Activated CD4-positive, alpha-beta T cell treated with anti-CD3 and anti-CD28 coated beads for 36 hours (primary cell): ENCODE measurements at regions of chr1 and their contacts with region 1.

Region 1: DNA sequence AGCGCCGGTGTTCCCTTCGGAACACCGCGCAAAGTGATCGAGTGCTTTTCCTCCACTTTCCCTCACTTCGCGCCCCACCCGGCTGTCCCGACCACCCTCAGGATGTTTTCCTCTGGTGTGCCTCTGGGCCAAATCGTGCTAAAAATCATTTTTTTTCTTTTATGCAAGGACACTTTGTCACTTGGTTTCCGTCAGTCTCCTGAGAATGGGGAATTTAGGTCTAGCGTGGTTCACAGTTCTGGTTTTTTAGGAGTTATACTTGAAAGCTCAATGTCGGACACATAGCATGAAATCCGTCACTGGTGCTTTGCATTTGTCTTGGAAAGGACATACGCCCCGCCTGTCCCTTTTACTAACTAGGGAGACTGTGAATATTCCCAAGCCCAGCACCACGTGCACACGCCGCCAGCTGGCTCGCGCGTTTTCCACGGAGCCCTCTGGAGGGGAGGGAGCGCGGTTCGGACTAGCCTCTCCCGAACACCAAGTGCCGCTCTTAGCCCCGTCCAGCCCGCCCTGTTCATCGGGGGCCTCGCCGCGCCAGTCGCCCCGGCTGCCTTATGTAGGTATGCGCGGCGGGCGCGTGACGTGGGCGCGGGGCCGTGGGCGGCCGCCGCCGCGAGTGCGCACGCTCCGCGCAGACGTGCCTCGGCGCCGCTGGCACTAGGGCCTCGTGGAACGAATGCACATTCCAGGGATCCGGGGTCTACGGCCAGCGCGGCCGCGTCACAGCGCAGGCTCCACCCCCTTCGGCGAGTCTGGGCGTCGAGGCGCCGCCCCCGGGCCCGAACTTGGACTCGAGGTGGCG is 572 bp upstream of the IRF2BP2 start:
- DNase-seq: peak; percentile 95
- ATAC-seq: peak; percentile 52
- H3K4me3 Mint-ChIP-seq: peak overlapping the region; percentile 79
- H3K27ac Mint-ChIP-seq: peak overlapping the region; percentile 90
- H3K4me1 Mint-ChIP-seq: peaks cover 29% of the 10 kb centered on the region
- H3K27me3 Mint-ChIP-seq: no peaks in the 10 kb centered on the region

Region 2: DNA sequence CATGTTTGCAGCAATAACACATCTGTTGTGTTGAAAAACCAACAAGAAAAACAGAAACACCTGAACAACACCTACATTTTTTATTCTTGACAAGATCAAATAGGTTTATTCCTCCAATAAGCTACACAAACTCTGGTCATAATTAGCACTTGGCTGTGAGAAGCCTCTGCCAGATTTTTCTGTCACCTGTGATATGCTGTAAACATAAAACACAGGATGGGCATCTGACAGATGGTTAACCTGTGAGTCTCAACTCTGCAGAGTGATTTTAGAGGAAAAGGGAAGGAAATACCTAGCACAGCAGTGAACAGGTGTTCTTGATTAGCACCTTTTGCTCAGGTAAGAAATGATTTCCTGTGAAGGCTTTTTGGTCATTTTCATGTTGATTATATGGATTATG is 412.7 kb before region 1 on chr1:
- CTCF ChIA-PET with region 1: no interaction called
- POLR2A ChIA-PET with region 1: no interaction called
- intact Hi-C with region 1: no loop called
- DNase-seq: no peak
- ATAC-seq: no peak
- H3K4me3 Mint-ChIP-seq: no peak overlapping the region
- H3K27ac Mint-ChIP-seq: no peak overlapping the region
- H3K4me1 Mint-ChIP-seq: no peaks in the 10 kb centered on the region
- H3K27me3 Mint-ChIP-seq: peaks cover 20% of the 10 kb centered on the region

Region 3: DNA sequence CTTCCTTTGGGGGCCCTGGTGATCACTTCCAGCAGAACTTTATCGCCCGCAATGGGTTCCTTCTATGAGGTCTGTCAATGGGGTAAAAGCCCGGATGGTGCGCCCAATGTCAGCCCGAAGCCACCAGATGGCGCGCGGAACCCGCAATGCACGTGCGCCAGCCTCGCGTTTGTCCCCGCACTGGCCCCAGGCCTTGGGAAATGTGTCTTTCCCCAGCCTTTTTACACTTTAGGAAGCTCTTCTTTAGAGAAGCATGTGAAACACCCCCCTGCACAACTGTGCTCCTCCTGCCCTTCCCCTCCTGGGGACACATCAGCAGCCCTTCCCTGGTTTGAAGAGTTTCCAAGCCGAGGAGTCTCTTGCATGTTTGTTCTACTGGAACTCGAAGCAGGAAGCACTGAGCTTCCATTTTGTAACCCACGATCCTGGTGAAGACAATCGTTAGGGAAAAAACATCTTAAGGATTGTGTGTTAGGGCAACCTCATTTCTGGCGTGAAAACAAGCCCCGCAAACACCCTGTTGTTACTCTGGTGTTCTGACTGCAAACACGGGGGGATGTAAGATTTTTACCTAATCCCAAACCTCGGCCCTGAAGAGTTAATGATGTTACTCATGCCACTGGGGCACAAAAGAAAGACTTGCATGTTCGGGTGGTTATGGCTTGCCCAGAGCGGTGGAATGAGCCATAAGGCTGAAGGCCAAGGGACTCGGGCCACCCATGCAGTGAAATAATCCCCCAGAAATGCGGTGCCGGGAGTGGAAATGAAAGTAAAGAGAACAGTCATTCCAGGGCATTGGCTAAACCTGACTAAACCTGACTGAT is 111.2 kb before region 1 on chr1:
- CTCF ChIA-PET with region 1: interaction called, 22 read pairs
- POLR2A ChIA-PET with region 1: interaction called, 5 read pairs
- intact Hi-C with region 1: loop called in 1 of 2 experiments (anchors 1 kb)
- DNase-seq: peak; percentile 93
- ATAC-seq: peak; percentile 54
- H3K4me3 Mint-ChIP-seq: no peak overlapping the region
- H3K27ac Mint-ChIP-seq: peak overlapping the region; percentile 80
- H3K4me1 Mint-ChIP-seq: peaks cover 76% of the 10 kb centered on the region
- H3K27me3 Mint-ChIP-seq: peaks cover 3% of the 10 kb centered on the region

Region 4: GRCh38 chr1:234722904-234723720 is 112.6 kb after region 1 on chr1:
- CTCF ChIA-PET with region 1: interaction called, 5 read pairs
- POLR2A ChIA-PET with region 1: interaction called, 20 read pairs
- intact Hi-C with region 1: loop called (anchors 1 kb)
- DNase-seq: peak; percentile 92
- ATAC-seq: peak; percentile 68
- H3K4me3 Mint-ChIP-seq: peak overlapping the region; percentile 64
- H3K27ac Mint-ChIP-seq: peak overlapping the region; percentile 97
- H3K4me1 Mint-ChIP-seq: peaks cover 66% of the 10 kb centered on the region
- H3K27me3 Mint-ChIP-seq: no peaks in the 10 kb centered on the region

Region 5: GRCh38 chr1:234842726-234843641 is 232.4 kb after region 1 on chr1:
- CTCF ChIA-PET with region 1: interaction called, 5 read pairs
- POLR2A ChIA-PET with region 1: interaction called, 4 read pairs
- intact Hi-C with region 1: loop called (anchors 1 kb)
- DNase-seq: peak; percentile 93
- ATAC-seq: peak; percentile 83
- H3K4me3 Mint-ChIP-seq: peak overlapping the region; percentile 63
- H3K27ac Mint-ChIP-seq: peak overlapping the region; percentile 94
- H3K4me1 Mint-ChIP-seq: peaks cover 85% of the 10 kb centered on the region
- H3K27me3 Mint-ChIP-seq: no peaks in the 10 kb centered on the region

Region 6: DNA sequence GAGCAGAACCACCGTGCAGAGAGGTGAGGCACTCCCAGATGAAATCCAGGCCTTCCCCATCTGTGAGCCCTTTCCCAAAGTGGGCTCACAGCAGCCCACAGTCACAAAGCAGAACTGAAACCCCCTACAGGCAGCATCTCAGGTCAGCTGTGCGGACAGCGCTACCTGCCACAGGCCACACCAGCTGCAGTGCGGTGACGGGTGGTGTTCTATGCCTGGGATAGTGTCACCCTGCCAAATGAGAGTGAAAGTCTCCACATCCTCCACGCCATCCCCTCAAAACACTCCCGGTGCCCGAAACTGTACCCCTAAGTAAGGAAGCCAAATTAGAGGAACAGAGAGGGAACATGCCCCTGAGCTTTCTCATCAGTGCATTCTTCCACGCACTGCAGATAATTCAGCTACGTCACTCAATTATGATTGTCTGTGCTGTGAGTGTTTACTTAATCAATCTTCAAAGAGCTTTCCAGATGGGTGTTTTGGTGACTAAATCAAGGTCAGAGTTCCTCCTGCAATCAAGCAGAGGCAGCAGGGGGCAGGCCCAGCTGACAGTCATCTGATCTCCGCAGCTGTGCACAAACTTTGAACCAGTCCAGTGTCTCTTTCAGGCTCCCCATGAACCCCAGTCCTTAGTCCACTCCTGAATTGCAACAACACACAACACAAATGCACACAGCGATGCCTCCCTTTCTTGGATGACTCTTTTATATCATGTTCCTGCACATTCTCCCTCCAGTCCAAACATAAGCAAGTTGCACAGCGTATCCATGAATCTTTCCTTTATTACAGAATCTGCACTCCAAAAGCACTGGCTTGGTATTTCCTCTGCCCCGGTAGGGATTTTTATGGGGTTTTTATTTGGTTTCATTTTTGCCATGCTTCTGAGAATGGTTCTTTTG is 368.1 kb after region 1 on chr1:
- CTCF ChIA-PET with region 1: no interaction called
- POLR2A ChIA-PET with region 1: interaction called, 4 read pairs
- intact Hi-C with region 1: loop called in 1 of 2 experiments (anchors 1 kb)
- DNase-seq: peak; percentile 80
- ATAC-seq: peak; percentile 62
- H3K4me3 Mint-ChIP-seq: peak overlapping the region; percentile 75
- H3K27ac Mint-ChIP-seq: peak overlapping the region; percentile 98
- H3K4me1 Mint-ChIP-seq: peaks cover 66% of the 10 kb centered on the region
- H3K27me3 Mint-ChIP-seq: no peaks in the 10 kb centered on the region

Region 7: GRCh38 chr1:235328357-235329138 is 718.0 kb after region 1 on chr1 and contains the start of gene GGPS1:
- CTCF ChIA-PET with region 1: no interaction called
- POLR2A ChIA-PET with region 1: no interaction called
- intact Hi-C with region 1: loop called in 1 of 2 experiments (anchors 1 kb)
- DNase-seq: peak; percentile 99
- ATAC-seq: peak; percentile 84
- H3K4me3 Mint-ChIP-seq: no peak within 1 kb of the TSS
- H3K27ac Mint-ChIP-seq: no peak within 1 kb of the TSS
- H3K4me1 Mint-ChIP-seq: peaks cover 42% of the 10 kb centered on the region
- H3K27me3 Mint-ChIP-seq: no peaks in the 10 kb centered on the region
- total RNA-seq, gene GGPS1: 35.6 to 37.4 TPM